HCT116 (cell line): ENCODE measurements at regions of chr12 and their contacts with region 1.

Region 1: GRCh38 chr12:12916135-12916944 is 25.0 kb downstream of the GPRC5A start:
- DNase-seq: peak; percentile 48
- ATAC-seq: peak; percentile 81
- H3K4me3 ChIP-seq: no peak overlapping the region
- H3K27ac ChIP-seq: peak overlapping the region; percentile 13; the same call in 1 of the 2 replicates
- H3K4me1 ChIP-seq: peaks cover 0 to 30% of the 10 kb centered on the region in 2 experiments; a peak in 3 of 4 replicates
- H3K27me3 ChIP-seq: no peaks in the 10 kb centered on the region
- CTCF ChIP-seq: peak; percentile 67 to 98 (median 93); a peak in 5 of 6 replicates
- POLR2A ChIP-seq: no peak
- RAD21 ChIP-seq: peak; percentile 84

Region 2: GRCh38 chr12:12786716-12787601 is 129.4 kb before region 1 on chr12:
- CTCF ChIA-PET with region 1: no interaction called
- POLR2A ChIA-PET with region 1: no interaction called
- RAD21 ChIA-PET with region 1: no interaction called
- intact Hi-C with region 1: loop called (anchors 5 kb)
- DNase-seq: no peak
- ATAC-seq: peak; percentile 83
- H3K4me3 ChIP-seq: peak overlapping the region; percentile 20 to 47
- H3K27ac ChIP-seq: peak overlapping the region; percentile 21; the same call in 1 of the 2 replicates
- H3K4me1 ChIP-seq: peaks cover 6 to 47% of the 10 kb centered on the region in 2 experiments; a peak in 3 of 4 replicates
- H3K27me3 ChIP-seq: no peaks in the 10 kb centered on the region
- CTCF ChIP-seq: no peak
- POLR2A ChIP-seq: no peak
- RAD21 ChIP-seq: no peak

Region 3: DNA sequence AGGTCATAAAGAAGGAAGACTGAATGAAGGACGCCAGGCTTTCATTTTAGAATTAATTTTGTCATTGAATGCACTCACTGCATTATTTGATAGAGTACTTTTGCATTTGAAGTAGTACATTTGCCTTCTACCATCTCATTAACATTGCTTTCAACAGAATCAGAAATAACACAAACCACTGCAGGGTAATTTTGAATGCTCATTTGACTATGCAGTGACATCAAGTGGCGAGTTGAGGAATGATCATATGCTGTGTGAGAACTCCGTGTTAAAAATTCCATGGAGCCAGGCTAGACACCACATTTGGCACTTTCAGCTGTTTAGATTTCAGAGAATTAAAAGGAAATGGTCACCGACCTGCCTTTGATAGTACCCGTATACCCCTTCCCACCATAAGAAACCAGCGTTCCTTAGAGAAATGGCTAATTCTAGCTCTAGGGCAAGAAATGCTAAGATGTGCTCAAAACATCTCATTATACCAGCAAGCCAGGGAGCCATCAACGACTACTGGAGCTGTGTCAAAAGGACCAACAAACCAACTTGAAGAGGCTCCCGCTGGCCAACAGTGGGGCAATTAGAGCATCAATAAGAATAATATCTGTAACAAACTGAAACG is 67.2 kb after region 1 on chr12:
- CTCF ChIA-PET with region 1: interaction called, 4 read pairs
- POLR2A ChIA-PET with region 1: no interaction called
- RAD21 ChIA-PET with region 1: no interaction called
- intact Hi-C with region 1: loop called (anchors 1 kb)
- DNase-seq: peak; percentile 33
- ATAC-seq: peak; percentile 81
- H3K4me3 ChIP-seq: no peak overlapping the region
- H3K27ac ChIP-seq: no peak overlapping the region
- H3K4me1 ChIP-seq: no peaks in the 10 kb centered on the region
- H3K27me3 ChIP-seq: no peaks in the 10 kb centered on the region
- CTCF ChIP-seq: peak; percentile 59 to 79 (median 69); a peak in 5 of 6 replicates
- POLR2A ChIP-seq: no peak
- RAD21 ChIP-seq: peak; percentile 85

Region 4: GRCh38 chr12:13008741-13009380 is 92.5 kb after region 1 on chr12:
- CTCF ChIA-PET with region 1: no interaction called
- POLR2A ChIA-PET with region 1: no interaction called
- RAD21 ChIA-PET with region 1: no interaction called
- intact Hi-C with region 1: no loop called
- DNase-seq: no peak
- ATAC-seq: no peak
- H3K4me3 ChIP-seq: no peak overlapping the region
- H3K27ac ChIP-seq: no peak overlapping the region
- H3K4me1 ChIP-seq: peaks cover 14 to 16% of the 10 kb centered on the region in 2 experiments
- H3K27me3 ChIP-seq: no peaks in the 10 kb centered on the region
- CTCF ChIP-seq: no peak
- POLR2A ChIP-seq: no peak
- RAD21 ChIP-seq: no peak

Region 5: GRCh38 chr12:13079440-13079906 is 163.1 kb after region 1 on chr12:
- CTCF ChIA-PET with region 1: no interaction called
- POLR2A ChIA-PET with region 1: no interaction called
- RAD21 ChIA-PET with region 1: no interaction called
- intact Hi-C with region 1: no loop called
- DNase-seq: no peak
- ATAC-seq: peak; percentile 54; the same call in 1 of the 2 replicates
- H3K4me3 ChIP-seq: no peak overlapping the region
- H3K27ac ChIP-seq: no peak overlapping the region
- H3K4me1 ChIP-seq: no peaks in the 10 kb centered on the region
- H3K27me3 ChIP-seq: no peaks in the 10 kb centered on the region
- CTCF ChIP-seq: peak in 2 of 3 experiments; percentile 36 to 51; a peak in 4 of 6 replicates
- POLR2A ChIP-seq: no peak
- RAD21 ChIP-seq: 0 out of 2 replicates have a peak, but pooled peaks have one; percentile 8